T-cell (primary cell): ENCODE measurements at regions of chr10 and their contacts with region 1.

Region 1: GRCh38 chr10:44362866-44363711 is 21.8 kb downstream of the CXCL12 start:
- DNase-seq: no peak
- ATAC-seq: no peak
- H3K4me3 ChIP-seq: no peak overlapping the region
- H3K4me3 Mint-ChIP-seq: no peak overlapping the region
- H3K27ac ChIP-seq: no peak overlapping the region
- H3K27ac Mint-ChIP-seq: no peak overlapping the region
- H3K4me1 ChIP-seq: no peaks in the 10 kb centered on the region
- H3K4me1 Mint-ChIP-seq: no peaks in the 10 kb centered on the region
- H3K27me3 ChIP-seq: peaks cover 0 to 25% of the 10 kb centered on the region in 2 experiments
- H3K27me3 Mint-ChIP-seq: peaks cover 8 to 13% of the 10 kb centered on the region in 2 donors

Region 2: GRCh38 chr10:43688348-43688867 is 674.7 kb before region 1 on chr10:
- CTCF ChIA-PET with region 1: interaction called in 1 of 2 experiments, 10 read pairs
- POLR2A ChIA-PET with region 1: no interaction called
- DNase-seq: no peak
- ATAC-seq: no peak
- H3K4me3 ChIP-seq: no peak overlapping the region
- H3K4me3 Mint-ChIP-seq: peak overlapping the region; percentile 63 to 91 (median 64)
- H3K27ac ChIP-seq: no peak overlapping the region
- H3K27ac Mint-ChIP-seq: no peak overlapping the region
- H3K4me1 ChIP-seq: peaks cover 0 to 13% of the 10 kb centered on the region in 2 experiments
- H3K4me1 Mint-ChIP-seq: peaks cover 4 to 18% (median 6%) of the 10 kb centered on the region in 3 donors
- H3K27me3 ChIP-seq: peaks cover 0 to 29% of the 10 kb centered on the region in 2 experiments
- H3K27me3 Mint-ChIP-seq: peaks cover 14 to 19% of the 10 kb centered on the region in 2 donors

Region 3: GRCh38 chr10:44195112-44196007 is 167.7 kb before region 1 on chr10:
- CTCF ChIA-PET with region 1: no interaction called
- POLR2A ChIA-PET with region 1: no interaction called
- DNase-seq: no peak
- ATAC-seq: no peak
- H3K4me3 ChIP-seq: no peak overlapping the region
- H3K4me3 Mint-ChIP-seq: no peak overlapping the region
- H3K27ac ChIP-seq: no peak overlapping the region
- H3K27ac Mint-ChIP-seq: no peak overlapping the region
- H3K4me1 ChIP-seq: no peaks in the 10 kb centered on the region
- H3K4me1 Mint-ChIP-seq: no peaks in the 10 kb centered on the region
- H3K27me3 ChIP-seq: peaks cover 0 to 18% of the 10 kb centered on the region in 2 experiments
- H3K27me3 Mint-ChIP-seq: peaks cover 3 to 6% of the 10 kb centered on the region in 2 donors